ENCODE measurements at regions of chr6 and their contacts with region 1.

Region 1: GRCh38 chr6:131694831-131695426 is 6.3 kb downstream of the OR2A4 start:
- DNase-seq: no peak
- H3K4me3 ChIP-seq: no peak overlapping the region
- H3K27ac ChIP-seq: no peak overlapping the region
- H3K4me1 ChIP-seq: no peaks in the 10 kb centered on the region
- H3K27me3 ChIP-seq: no peaks in the 10 kb centered on the region
- CTCF ChIP-seq: peak; percentile 63 to 84 (median 66)
- EP300 ChIP-seq: no peak
- POLR2A ChIP-seq: no peak

Region 2: GRCh38 chr6:131807644-131808459 is 112.9 kb after region 1 on chr6 and contains the start of gene ENPP1:
- intact Hi-C with region 1: loop called (anchors 10 kb)
- DNase-seq: no peak
- H3K4me3 ChIP-seq: peak within 1 kb of the TSS; percentile 71 to 77 (median 74)
- H3K27ac ChIP-seq: peak within 1 kb of the TSS; percentile 76 to 86 (median 80)
- H3K4me1 ChIP-seq: peaks cover 10 to 16% (median 13%) of the 10 kb centered on the region in 4 donors
- H3K27me3 ChIP-seq: no peaks in the 10 kb centered on the region
- CTCF ChIP-seq: peak; percentile 23 to 56 (median 32)
- EP300 ChIP-seq: no peak
- POLR2A ChIP-seq: no peak
- total RNA-seq, gene ENPP1: 7.9 to 35.2 (median 19.2) TPM

Region 3: DNA sequence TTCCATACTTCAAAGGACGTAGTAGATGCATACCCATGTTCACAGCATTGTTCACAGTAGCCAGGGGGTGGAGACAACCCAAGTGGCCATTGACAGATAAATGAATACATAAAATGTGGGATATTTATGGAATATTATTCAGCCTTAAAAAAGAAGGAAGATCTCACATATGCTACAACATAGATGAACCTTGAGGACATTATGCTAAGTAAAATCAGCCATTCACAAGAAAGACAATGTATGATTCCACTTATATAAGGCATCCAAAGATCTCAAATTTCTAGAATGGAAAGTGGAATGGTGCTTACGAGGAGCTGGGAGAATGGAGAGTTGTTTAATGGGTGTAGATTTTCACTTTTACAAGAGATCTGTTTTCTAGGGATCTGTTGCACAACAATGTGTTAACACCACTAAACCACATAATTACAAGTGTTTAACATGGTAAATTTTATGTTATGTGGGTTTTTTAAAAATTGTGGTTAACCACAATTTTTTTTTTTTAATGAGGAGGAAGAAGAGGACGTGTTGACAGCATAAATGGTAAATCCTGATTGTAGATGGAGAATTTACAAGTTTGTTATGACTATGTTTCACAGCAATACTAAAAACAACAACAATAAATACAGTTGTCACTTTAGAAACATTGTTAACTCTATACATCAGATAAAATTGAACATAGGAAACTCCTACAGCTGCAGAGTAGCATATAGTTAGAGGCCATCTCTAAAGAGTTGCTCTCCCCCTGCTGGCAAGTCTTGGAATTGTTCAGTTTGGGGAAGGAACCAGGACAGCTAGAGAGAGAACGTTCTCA is 214.7 kb after region 1 on chr6:
- intact Hi-C with region 1: loop called (anchors 5 kb)
- DNase-seq: no peak
- H3K4me3 ChIP-seq: no peak overlapping the region
- H3K27ac ChIP-seq: no peak overlapping the region
- H3K4me1 ChIP-seq: no peaks in the 10 kb centered on the region
- H3K27me3 ChIP-seq: peaks cover 0 to 2% (median 0%) of the 10 kb centered on the region in 4 donors
- CTCF ChIP-seq: peak; percentile 82 to 94 (median 87)
- EP300 ChIP-seq: no peak
- POLR2A ChIP-seq: no peak

Region 4: GRCh38 chr6:132483779-132484679 is 789.1 kb after region 1 on chr6:
- intact Hi-C with region 1: no loop called
- DNase-seq: no peak
- H3K4me3 ChIP-seq: no peak overlapping the region
- H3K27ac ChIP-seq: no peak overlapping the region
- H3K4me1 ChIP-seq: peaks cover 7 to 55% (median 40%) of the 10 kb centered on the region in 4 donors
- H3K27me3 ChIP-seq: no peaks in the 10 kb centered on the region
- CTCF ChIP-seq: peak; percentile 73 to 80 (median 76)
- EP300 ChIP-seq: no peak
- POLR2A ChIP-seq: no peak